CD8-positive, alpha-beta T cell (primary cell): ENCODE measurements at regions of chr15 and their contacts with region 1.

Region 1: GRCh38 chr15:79989682-79990081 is 18.7 kb upstream of the BCL2A1 start:
- DNase-seq: no peak
- ATAC-seq: no peak
- H3K4me3 ChIP-seq: no peak overlapping the region
- H3K4me3 Mint-ChIP-seq: no peak overlapping the region
- H3K27ac ChIP-seq: no peak overlapping the region
- H3K27ac Mint-ChIP-seq: no peak overlapping the region
- H3K4me1 ChIP-seq: no peaks in the 10 kb centered on the region
- H3K4me1 Mint-ChIP-seq: peaks cover 4% of the 10 kb centered on the region
- H3K27me3 ChIP-seq: no peaks in the 10 kb centered on the region
- H3K27me3 Mint-ChIP-seq: no peaks in the 10 kb centered on the region
- CTCF ChIP-seq: no peak

Region 2: DNA sequence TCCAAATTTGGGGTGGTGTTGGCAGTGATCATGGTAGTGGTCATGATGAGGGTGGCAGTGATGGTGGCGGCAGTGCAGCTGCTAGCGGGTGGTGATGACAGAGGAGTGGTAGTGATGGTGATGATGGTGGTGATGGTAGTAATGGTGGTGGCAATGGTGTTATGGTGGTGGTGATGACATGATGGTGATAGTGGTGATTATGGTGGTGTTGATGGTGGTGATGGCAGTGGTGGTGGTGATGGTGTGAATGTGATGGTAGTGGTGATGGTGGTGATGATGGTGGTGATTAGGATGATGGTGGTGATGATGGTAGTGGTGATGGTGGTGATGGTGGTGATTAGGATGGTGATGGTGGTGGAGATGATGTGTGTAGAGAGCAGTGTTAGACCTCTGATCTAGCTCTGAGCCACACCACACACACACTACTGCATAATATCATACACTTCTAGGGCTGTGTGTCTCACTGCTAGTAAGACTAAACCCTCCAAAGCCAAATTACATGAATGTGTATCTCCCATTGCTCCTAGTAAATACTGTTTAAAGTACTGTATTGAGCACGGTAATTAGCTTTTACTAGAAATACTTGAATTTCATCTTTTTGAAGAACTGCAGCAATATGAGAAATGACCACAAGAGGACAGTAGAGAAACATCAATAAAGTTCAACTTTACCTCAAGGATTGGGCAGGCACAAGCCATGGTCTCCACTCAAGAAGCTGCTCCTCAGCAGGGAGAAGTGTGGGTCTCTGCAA is 649.9 kb before region 1 on chr15:
- CTCF ChIA-PET with region 1: interaction called, 3 read pairs
- POLR2A ChIA-PET with region 1: no interaction called
- intact Hi-C with region 1: loop called in 1 of 2 experiments (anchors 2 kb)
- DNase-seq: peak in 2 of 9 experiments; percentile 12 to 20
- ATAC-seq: no peak
- H3K4me3 ChIP-seq: no peak overlapping the region
- H3K4me3 Mint-ChIP-seq: no peak overlapping the region
- H3K27ac ChIP-seq: no peak overlapping the region
- H3K27ac Mint-ChIP-seq: no peak overlapping the region
- H3K4me1 ChIP-seq: no peaks in the 10 kb centered on the region
- H3K4me1 Mint-ChIP-seq: peaks cover 2% of the 10 kb centered on the region
- H3K27me3 ChIP-seq: no peaks in the 10 kb centered on the region
- H3K27me3 Mint-ChIP-seq: no peaks in the 10 kb centered on the region
- CTCF ChIP-seq: peak; percentile 59

Region 3: GRCh38 chr15:79769069-79769481 is 220.6 kb before region 1 on chr15:
- CTCF ChIA-PET with region 1: no interaction called
- POLR2A ChIA-PET with region 1: no interaction called
- intact Hi-C with region 1: loop called (anchors 2 to 10 kb)
- DNase-seq: peak in 1 of 9 experiments; percentile 11
- ATAC-seq: no peak
- H3K4me3 ChIP-seq: no peak overlapping the region
- H3K4me3 Mint-ChIP-seq: no peak overlapping the region
- H3K27ac ChIP-seq: no peak overlapping the region
- H3K27ac Mint-ChIP-seq: no peak overlapping the region
- H3K4me1 ChIP-seq: no peaks in the 10 kb centered on the region
- H3K4me1 Mint-ChIP-seq: no peaks in the 10 kb centered on the region
- H3K27me3 ChIP-seq: no peaks in the 10 kb centered on the region
- H3K27me3 Mint-ChIP-seq: peaks cover 2% of the 10 kb centered on the region
- CTCF ChIP-seq: no peak

Region 4: GRCh38 chr15:79853458-79854328 is 136.0 kb before region 1 on chr15:
- CTCF ChIA-PET with region 1: interaction called, 46 read pairs
- POLR2A ChIA-PET with region 1: interaction called, 3 read pairs
- intact Hi-C with region 1: loop called (anchors 1 kb)
- DNase-seq: peak; percentile 21 to 77 (median 59)
- ATAC-seq: peak; percentile 99
- H3K4me3 ChIP-seq: no peak overlapping the region
- H3K4me3 Mint-ChIP-seq: no peak overlapping the region
- H3K27ac ChIP-seq: no peak overlapping the region
- H3K27ac Mint-ChIP-seq: peak overlapping the region; percentile 42
- H3K4me1 ChIP-seq: no peaks in the 10 kb centered on the region
- H3K4me1 Mint-ChIP-seq: peaks cover 14% of the 10 kb centered on the region
- H3K27me3 ChIP-seq: no peaks in the 10 kb centered on the region
- H3K27me3 Mint-ChIP-seq: no peaks in the 10 kb centered on the region
- CTCF ChIP-seq: peak; percentile 93

Region 5: GRCh38 chr15:79872358-79873017 is 117.2 kb before region 1 on chr15:
- CTCF ChIA-PET with region 1: no interaction called
- POLR2A ChIA-PET with region 1: no interaction called
- intact Hi-C with region 1: no loop called
- DNase-seq: peak in 7 of 9 experiments; percentile 10 to 75 (median 32)
- ATAC-seq: peak; percentile 84
- H3K4me3 ChIP-seq: no peak overlapping the region
- H3K4me3 Mint-ChIP-seq: no peak overlapping the region
- H3K27ac ChIP-seq: no peak overlapping the region
- H3K27ac Mint-ChIP-seq: peak overlapping the region; percentile 78
- H3K4me1 ChIP-seq: peaks cover 11% of the 10 kb centered on the region
- H3K4me1 Mint-ChIP-seq: peaks cover 32% of the 10 kb centered on the region
- H3K27me3 ChIP-seq: no peaks in the 10 kb centered on the region
- H3K27me3 Mint-ChIP-seq: no peaks in the 10 kb centered on the region
- CTCF ChIP-seq: no peak

Region 6: GRCh38 chr15:79923515-79924395 is 65.9 kb before region 1 on chr15:
- CTCF ChIA-PET with region 1: interaction called, 15 read pairs
- POLR2A ChIA-PET with region 1: interaction called, 7 read pairs
- intact Hi-C with region 1: loop called (anchors 1 to 2 kb)
- DNase-seq: peak; percentile 95 to 100 (median 99)
- ATAC-seq: peak; percentile 93
- H3K4me3 ChIP-seq: peak overlapping the region; percentile 76 to 85
- H3K4me3 Mint-ChIP-seq: peak overlapping the region; percentile 91
- H3K27ac ChIP-seq: peak overlapping the region; percentile 90 to 94
- H3K27ac Mint-ChIP-seq: peak overlapping the region; percentile 93
- H3K4me1 ChIP-seq: peaks cover 11% of the 10 kb centered on the region
- H3K4me1 Mint-ChIP-seq: peaks cover 15% of the 10 kb centered on the region
- H3K27me3 ChIP-seq: no peaks in the 10 kb centered on the region
- H3K27me3 Mint-ChIP-seq: no peaks in the 10 kb centered on the region
- CTCF ChIP-seq: no peak

Region 7: GRCh38 chr15:80140909-80141308 is 151.2 kb after region 1 on chr15:
- CTCF ChIA-PET with region 1: no interaction called
- POLR2A ChIA-PET with region 1: no interaction called
- intact Hi-C with region 1: no loop called
- DNase-seq: no peak
- ATAC-seq: no peak
- H3K4me3 ChIP-seq: no peak overlapping the region
- H3K4me3 Mint-ChIP-seq: no peak overlapping the region
- H3K27ac ChIP-seq: no peak overlapping the region
- H3K27ac Mint-ChIP-seq: no peak overlapping the region
- H3K4me1 ChIP-seq: no peaks in the 10 kb centered on the region
- H3K4me1 Mint-ChIP-seq: no peaks in the 10 kb centered on the region
- H3K27me3 ChIP-seq: no peaks in the 10 kb centered on the region
- H3K27me3 Mint-ChIP-seq: no peaks in the 10 kb centered on the region
- CTCF ChIP-seq: no peak

Region 8: GRCh38 chr15:80173022-80173759 is 183.5 kb after region 1 on chr15:
- CTCF ChIA-PET with region 1: interaction called, 13 read pairs
- POLR2A ChIA-PET with region 1: no interaction called
- intact Hi-C with region 1: loop called (anchors 1 to 5 kb)
- DNase-seq: peak; percentile 52 to 81 (median 69)
- ATAC-seq: peak; percentile 77
- H3K4me3 ChIP-seq: no peak overlapping the region
- H3K4me3 Mint-ChIP-seq: no peak overlapping the region
- H3K27ac ChIP-seq: no peak overlapping the region
- H3K27ac Mint-ChIP-seq: no peak overlapping the region
- H3K4me1 ChIP-seq: no peaks in the 10 kb centered on the region
- H3K4me1 Mint-ChIP-seq: no peaks in the 10 kb centered on the region
- H3K27me3 ChIP-seq: no peaks in the 10 kb centered on the region
- H3K27me3 Mint-ChIP-seq: no peaks in the 10 kb centered on the region
- CTCF ChIP-seq: peak; percentile 76

Region 9: DNA sequence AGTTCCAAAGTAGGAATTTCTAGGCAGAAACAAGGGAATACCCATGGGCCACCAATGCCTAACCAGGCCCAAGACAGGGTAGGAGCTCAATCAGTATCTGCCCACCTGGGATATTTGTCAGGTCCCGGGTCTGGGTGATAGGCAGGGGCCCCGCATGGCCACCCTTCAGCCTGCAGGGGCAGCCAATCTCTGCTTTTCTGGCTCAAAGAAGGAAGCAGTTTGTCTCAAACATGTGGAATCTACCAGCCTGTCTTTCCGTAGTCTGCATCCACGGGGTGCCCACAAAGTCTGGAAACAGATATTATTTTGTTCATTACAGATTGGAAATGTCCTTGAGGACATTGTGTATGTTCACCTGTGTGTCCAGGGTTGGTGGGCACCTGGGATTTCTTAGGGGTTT is 845.7 kb after region 1 on chr15:
- CTCF ChIA-PET with region 1: no interaction called
- POLR2A ChIA-PET with region 1: no interaction called
- intact Hi-C with region 1: no loop called
- DNase-seq: no peak
- ATAC-seq: no peak
- H3K4me3 ChIP-seq: no peak overlapping the region
- H3K4me3 Mint-ChIP-seq: no peak overlapping the region
- H3K27ac ChIP-seq: no peak overlapping the region
- H3K27ac Mint-ChIP-seq: no peak overlapping the region
- H3K4me1 ChIP-seq: no peaks in the 10 kb centered on the region
- H3K4me1 Mint-ChIP-seq: no peaks in the 10 kb centered on the region
- H3K27me3 ChIP-seq: no peaks in the 10 kb centered on the region
- H3K27me3 Mint-ChIP-seq: peaks cover 19% of the 10 kb centered on the region
- CTCF ChIP-seq: no peak